Ascending aorta (tissue), 2 donors: ENCODE measurements at regions of chr22 and their contacts with region 1.

Region 1: GRCh38 chr22:27420817-27421361 is 380.7 kb downstream of the MN1 start:
- DNase-seq: peak; percentile 47 to 93
- H3K4me3 ChIP-seq: peak overlapping the region; percentile 18 to 38
- H3K27ac ChIP-seq: peak overlapping the region; percentile 76 to 87
- H3K4me1 ChIP-seq: peaks cover 0 to 17% of the 10 kb centered on the region in 2 donors
- H3K27me3 ChIP-seq: no peaks in the 10 kb centered on the region
- CTCF ChIP-seq: no peak

Region 2: DNA sequence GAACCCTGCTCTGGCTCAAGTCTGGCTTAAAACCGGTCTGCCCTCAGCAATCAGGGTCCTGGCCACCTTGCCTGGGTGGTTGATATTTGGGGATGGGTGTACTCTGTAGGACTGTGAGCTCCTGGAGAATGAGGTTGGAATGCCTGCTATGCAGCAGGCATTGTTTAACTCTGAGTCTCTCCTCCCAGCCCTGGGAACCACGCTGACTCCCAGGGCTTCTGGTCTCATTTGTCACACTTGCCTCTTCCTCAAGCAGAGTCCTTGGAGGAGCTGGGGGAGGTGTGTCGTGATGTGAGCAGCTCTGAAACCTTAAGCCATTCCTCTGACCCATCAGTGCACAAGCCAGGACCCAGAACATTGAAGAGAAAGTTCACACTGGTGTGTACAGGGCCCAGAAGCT is 40.6 kb after region 1 on chr22:
- intact Hi-C with region 1: loop called (anchors 2 kb)
- DNase-seq: peak in 1 of 2 donors; percentile 76
- H3K4me3 ChIP-seq: no peak overlapping the region
- H3K27ac ChIP-seq: peak overlapping the region; percentile 62 to 80
- H3K4me1 ChIP-seq: peaks cover 0 to 34% of the 10 kb centered on the region in 2 donors
- H3K27me3 ChIP-seq: no peaks in the 10 kb centered on the region
- CTCF ChIP-seq: no peak

Region 3: GRCh38 chr22:27489176-27489675 is 68.3 kb after region 1 on chr22:
- intact Hi-C with region 1: loop called (anchors 2 kb)
- DNase-seq: no peak
- H3K4me3 ChIP-seq: no peak overlapping the region
- H3K27ac ChIP-seq: peak overlapping the region; percentile 15 to 28
- H3K4me1 ChIP-seq: peaks cover 5 to 10% of the 10 kb centered on the region in 2 donors
- H3K27me3 ChIP-seq: no peaks in the 10 kb centered on the region
- CTCF ChIP-seq: no peak